ENCODE measurements at regions of chr18 and their contacts with region 1.

Region 1: GRCh38 chr18:55251254-55251971 is 292.2 kb upstream of the CCDC68 start:
- DNase-seq: no peak
- ATAC-seq: peak; percentile 77 to 86
- H3K4me3 ChIP-seq: peak overlapping the region; percentile 5 to 29 (median 16)
- H3K27ac ChIP-seq: peak overlapping the region; percentile 48 to 72 (median 67)
- H3K4me1 ChIP-seq: peaks cover 35 to 41% of the 10 kb centered on the region in 2 donors
- H3K27me3 ChIP-seq: no peaks in the 10 kb centered on the region
- CTCF ChIP-seq: no peak
- POLR2A ChIP-seq: no peak

Region 2: DNA sequence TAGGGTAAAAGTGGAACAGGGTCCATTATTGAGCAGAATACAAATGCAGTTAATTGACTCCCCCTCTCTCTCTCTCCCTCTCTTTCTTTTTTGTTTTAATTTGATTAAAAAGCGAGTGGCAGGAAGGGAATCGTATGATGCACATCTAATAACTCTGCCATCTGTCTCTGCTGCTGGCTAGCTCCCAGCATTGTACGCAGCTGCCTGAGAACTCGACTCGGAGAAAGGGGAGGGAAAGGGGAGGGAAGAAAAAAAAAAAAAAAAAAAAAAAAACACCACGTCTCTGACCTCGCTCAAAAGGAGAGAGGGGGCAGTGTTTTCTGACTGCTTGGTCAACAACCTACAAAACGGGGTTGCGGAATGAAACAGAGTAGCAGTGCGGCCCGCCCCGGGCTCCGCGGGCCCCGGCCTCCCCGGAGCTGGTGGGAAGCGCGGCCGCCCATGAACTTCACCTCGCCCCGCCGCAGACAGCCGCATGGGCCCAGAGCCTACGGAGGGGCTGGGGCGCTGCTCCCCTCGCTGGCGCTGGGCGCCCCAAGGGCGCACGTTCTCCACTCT is 70.8 kb after region 1 on chr18:
- in situ Hi-C with region 1: loop called in 2 of 4 experiments (anchors 5 to 25 kb)
- intact Hi-C with region 1: loop called (anchors 5 kb)
- DNase-seq: peak; percentile 77 to 90
- ATAC-seq: peak; percentile 88 to 90
- H3K4me3 ChIP-seq: peak overlapping the region; percentile 57 to 82 (median 73)
- H3K27ac ChIP-seq: peak overlapping the region; percentile 93 to 95 (median 94)
- H3K4me1 ChIP-seq: peaks cover 53 to 54% of the 10 kb centered on the region in 2 donors
- H3K27me3 ChIP-seq: no peaks in the 10 kb centered on the region
- CTCF ChIP-seq: peak in 2 of 5 experiments; percentile 12 to 17
- POLR2A ChIP-seq: peak; percentile 68 to 84

Region 3: DNA sequence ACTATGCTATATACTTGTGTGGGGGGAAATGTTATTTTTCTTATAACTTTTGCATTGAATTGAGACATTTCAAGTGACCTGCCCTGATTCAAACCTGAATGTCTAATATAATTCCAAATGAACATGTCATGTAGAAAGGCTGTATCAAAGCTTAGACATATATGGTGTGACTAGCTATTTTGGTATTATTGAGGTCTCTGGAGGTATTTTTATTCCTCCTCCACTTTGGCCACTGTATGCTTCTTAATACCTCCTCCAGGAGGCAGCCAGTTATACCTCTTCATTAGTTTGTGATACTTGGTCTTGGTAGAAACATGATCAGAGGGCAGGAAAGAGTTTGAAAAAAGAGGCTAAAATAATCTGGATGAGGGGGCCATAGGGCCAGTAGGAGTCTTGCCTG is 119.5 kb after region 1 on chr18:
- in situ Hi-C with region 1: no loop called
- intact Hi-C with region 1: no loop called
- DNase-seq: no peak
- ATAC-seq: no peak
- H3K4me3 ChIP-seq: no peak overlapping the region
- H3K27ac ChIP-seq: no peak overlapping the region
- H3K4me1 ChIP-seq: peaks cover 5 to 13% of the 10 kb centered on the region in 2 donors
- H3K27me3 ChIP-seq: no peaks in the 10 kb centered on the region
- CTCF ChIP-seq: no peak
- POLR2A ChIP-seq: no peak

Measured in gastrocnemius medialis (tissue), 4 donors.